IMR-90 (cell line): ENCODE measurements at regions of chr7 and their contacts with region 1.

Region 1: DNA sequence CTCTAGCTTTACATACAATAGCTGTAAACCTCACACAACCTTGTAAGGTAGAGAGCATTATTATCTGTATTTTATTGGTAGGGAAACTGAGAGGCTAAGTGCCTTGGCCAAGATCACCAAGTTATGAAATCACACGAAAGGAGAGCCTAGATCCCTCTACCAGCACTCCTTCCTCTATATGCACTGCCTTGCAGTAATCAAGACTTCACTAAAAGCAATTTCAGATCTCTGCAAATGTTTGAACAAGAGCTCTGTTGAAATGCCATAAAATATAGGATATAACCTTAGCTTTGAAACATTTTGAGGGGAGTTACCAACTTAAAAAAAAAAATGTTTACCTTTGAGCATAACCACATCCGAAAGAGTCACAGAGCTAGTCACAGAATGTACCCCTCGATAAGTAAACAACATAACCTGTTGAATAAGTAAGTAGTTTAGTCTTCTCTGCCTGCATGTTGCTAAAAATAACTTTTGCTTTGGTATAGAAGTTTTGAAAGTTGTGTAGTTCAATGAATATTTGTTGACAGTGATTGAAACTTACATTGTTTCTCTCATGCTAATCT is 709.4 kb downstream of the AUTS2 start:
- DNase-seq: no peak
- ATAC-seq: no peak
- H3K4me3 ChIP-seq: no peak overlapping the region
- H3K27ac ChIP-seq: no peak overlapping the region
- H3K4me1 ChIP-seq: no peaks in the 10 kb centered on the region
- H3K27me3 ChIP-seq: no peaks in the 10 kb centered on the region
- CTCF ChIP-seq: no peak
- POLR2A ChIP-seq: no peak
- RAD21 ChIP-seq: no peak

Region 2: GRCh38 chr7:71243736-71244410 is 936.2 kb after region 1 on chr7:
- CTCF ChIA-PET with region 1: interaction called, 10 read pairs
- POLR2A ChIA-PET with region 1: no interaction called
- dilution Hi-C with region 1: no loop called
- in situ Hi-C with region 1: no loop called
- intact Hi-C with region 1: no loop called
- DNase-seq: no peak
- ATAC-seq: no peak
- H3K4me3 ChIP-seq: no peak overlapping the region
- H3K27ac ChIP-seq: no peak overlapping the region
- H3K4me1 ChIP-seq: no peaks in the 10 kb centered on the region
- H3K27me3 ChIP-seq: no peaks in the 10 kb centered on the region
- CTCF ChIP-seq: no peak
- POLR2A ChIP-seq: no peak
- RAD21 ChIP-seq: no peak